Caco-2 (cell line): ENCODE measurements at regions of chr6 and their contacts with region 1.

Region 1: GRCh38 chr6:81834141-81834681 is 81.7 kb upstream of the TENT5A start:
- DNase-seq: peak; percentile 36 to 48
- H3K4me3 ChIP-seq: no peak overlapping the region
- H3K4me3 Mint-ChIP-seq: peak overlapping the region; percentile 40
- H3K27ac Mint-ChIP-seq: peak overlapping the region; percentile 95
- H3K4me1 ChIP-seq: peaks cover 69% of the 10 kb centered on the region
- H3K4me1 Mint-ChIP-seq: peaks cover 45% of the 10 kb centered on the region
- H3K27me3 ChIP-seq: no peaks in the 10 kb centered on the region
- H3K27me3 Mint-ChIP-seq: no peaks in the 10 kb centered on the region
- CTCF ChIP-seq: no peak

Region 2: GRCh38 chr6:81844686-81845085 is 10.5 kb after region 1 on chr6:
- CTCF ChIA-PET with region 1: interaction called, 3 read pairs
- POLR2A ChIA-PET with region 1: no interaction called
- intact Hi-C with region 1: loop called (anchors 1 kb)
- DNase-seq: no peak
- H3K4me3 ChIP-seq: no peak overlapping the region
- H3K4me3 Mint-ChIP-seq: no peak overlapping the region
- H3K27ac Mint-ChIP-seq: no peak overlapping the region
- H3K4me1 ChIP-seq: peaks cover 49% of the 10 kb centered on the region
- H3K4me1 Mint-ChIP-seq: peaks cover 10% of the 10 kb centered on the region
- H3K27me3 ChIP-seq: no peaks in the 10 kb centered on the region
- H3K27me3 Mint-ChIP-seq: no peaks in the 10 kb centered on the region
- CTCF ChIP-seq: no peak

Region 3: GRCh38 chr6:81853982-81854381 is 19.8 kb after region 1 on chr6:
- CTCF ChIA-PET with region 1: interaction called, 3 read pairs
- POLR2A ChIA-PET with region 1: no interaction called
- intact Hi-C with region 1: loop called (anchors 1 kb)
- DNase-seq: peak in 1 of 2 experiments; percentile 63
- H3K4me3 ChIP-seq: no peak overlapping the region
- H3K4me3 Mint-ChIP-seq: peak overlapping the region; percentile 58
- H3K27ac Mint-ChIP-seq: peak overlapping the region; percentile 87
- H3K4me1 ChIP-seq: peaks cover 51% of the 10 kb centered on the region
- H3K4me1 Mint-ChIP-seq: peaks cover 37% of the 10 kb centered on the region
- H3K27me3 ChIP-seq: no peaks in the 10 kb centered on the region
- H3K27me3 Mint-ChIP-seq: no peaks in the 10 kb centered on the region
- CTCF ChIP-seq: no peak

Region 4: DNA sequence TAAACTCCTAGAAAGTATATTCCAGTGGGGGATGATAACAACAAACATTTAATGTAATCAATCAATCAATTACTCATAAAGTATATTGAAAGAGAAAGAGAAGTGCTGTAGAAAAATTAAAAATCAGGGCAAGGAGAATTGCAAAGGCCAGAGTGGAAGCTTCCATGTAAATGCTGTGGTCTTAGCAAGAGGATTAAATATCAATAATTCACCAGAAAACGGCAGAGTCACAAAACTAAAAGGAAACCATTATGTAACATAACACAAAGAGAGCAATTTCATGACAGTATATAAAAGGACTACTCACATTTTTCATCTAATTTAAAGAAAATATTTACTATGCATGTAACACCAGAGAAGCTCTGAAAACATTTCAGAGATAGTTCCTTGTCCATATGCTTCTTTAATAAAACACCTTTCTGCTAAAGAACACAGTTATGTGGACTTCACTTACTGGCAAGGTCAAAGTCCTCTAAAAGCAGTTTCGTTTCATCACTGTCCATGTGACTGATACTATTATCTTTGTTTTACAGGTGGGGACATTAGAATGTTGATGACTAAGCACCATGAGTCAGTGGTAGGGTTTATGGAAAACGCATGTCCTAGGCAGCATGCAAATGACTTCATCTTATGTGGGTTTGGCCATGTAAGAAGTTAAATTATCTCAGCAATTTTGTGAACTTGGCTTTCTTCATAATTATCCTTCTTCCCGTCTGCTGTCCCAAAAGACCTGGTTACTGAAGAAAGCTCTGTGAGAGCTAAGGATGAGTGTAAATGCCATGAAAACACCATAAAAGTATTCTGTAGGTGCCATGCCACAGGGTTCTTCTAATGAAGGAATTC is 104.0 kb after region 1 on chr6:
- CTCF ChIA-PET with region 1: no interaction called
- POLR2A ChIA-PET with region 1: no interaction called
- intact Hi-C with region 1: loop called (anchors 1 kb)
- DNase-seq: peak; percentile 69 to 72
- H3K4me3 ChIP-seq: peak overlapping the region; percentile 12; the same call in 1 of the 2 replicates
- H3K4me3 Mint-ChIP-seq: peak overlapping the region; percentile 64
- H3K27ac Mint-ChIP-seq: peak overlapping the region; percentile 95
- H3K4me1 ChIP-seq: peaks cover 55% of the 10 kb centered on the region
- H3K4me1 Mint-ChIP-seq: peaks cover 40% of the 10 kb centered on the region
- H3K27me3 ChIP-seq: no peaks in the 10 kb centered on the region
- H3K27me3 Mint-ChIP-seq: no peaks in the 10 kb centered on the region
- CTCF ChIP-seq: no peak

Region 5: DNA sequence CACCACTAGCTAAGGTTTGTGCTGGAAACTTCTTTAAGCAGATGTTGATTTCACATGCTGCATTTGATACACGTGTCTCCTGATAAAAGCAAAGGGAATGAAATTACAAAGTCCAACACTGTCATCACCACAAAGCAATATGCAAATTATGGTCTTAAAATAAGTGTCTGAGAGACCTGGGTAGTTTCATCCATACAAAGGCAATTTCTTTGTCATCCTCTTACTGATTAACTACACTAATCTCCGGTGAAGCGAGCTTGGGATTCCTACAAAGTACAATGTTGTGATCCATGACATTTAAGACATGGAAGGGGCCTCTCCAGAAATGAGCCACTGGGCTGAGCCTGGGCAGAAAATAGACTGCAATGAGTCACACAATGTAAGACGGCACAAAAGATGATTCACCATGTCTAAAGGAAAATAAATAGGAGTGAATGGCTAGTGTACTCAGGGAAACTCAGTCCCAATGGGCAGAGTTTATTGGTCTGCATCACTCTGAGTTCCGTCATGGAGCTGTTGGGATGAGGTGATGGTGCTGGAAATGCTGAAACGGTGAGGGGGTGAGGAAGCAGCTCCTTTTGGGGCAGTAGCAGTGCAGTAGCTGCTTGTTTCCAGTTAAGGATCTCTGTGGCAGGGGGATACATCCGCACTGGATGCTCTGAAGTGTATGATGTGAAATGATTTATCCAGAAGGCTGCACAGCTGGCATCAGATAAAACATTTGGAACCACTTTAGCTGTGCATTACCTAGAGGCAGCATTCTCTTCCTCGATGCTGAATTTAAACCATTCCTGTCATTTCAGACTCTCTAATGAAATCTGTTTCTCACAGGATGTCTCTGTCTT is 310.0 kb after region 1 on chr6:
- CTCF ChIA-PET with region 1: no interaction called
- POLR2A ChIA-PET with region 1: no interaction called
- intact Hi-C with region 1: loop called (anchors 5 kb)
- DNase-seq: peak; percentile 71 to 81
- H3K4me3 ChIP-seq: no peak overlapping the region
- H3K4me3 Mint-ChIP-seq: peak overlapping the region; percentile 67
- H3K27ac Mint-ChIP-seq: peak overlapping the region; percentile 90
- H3K4me1 ChIP-seq: peaks cover 34% of the 10 kb centered on the region
- H3K4me1 Mint-ChIP-seq: peaks cover 18% of the 10 kb centered on the region
- H3K27me3 ChIP-seq: no peaks in the 10 kb centered on the region
- H3K27me3 Mint-ChIP-seq: no peaks in the 10 kb centered on the region
- CTCF ChIP-seq: no peak